ENCODE measurements at regions of chr6 and their contacts with region 1.

Region 1: DNA sequence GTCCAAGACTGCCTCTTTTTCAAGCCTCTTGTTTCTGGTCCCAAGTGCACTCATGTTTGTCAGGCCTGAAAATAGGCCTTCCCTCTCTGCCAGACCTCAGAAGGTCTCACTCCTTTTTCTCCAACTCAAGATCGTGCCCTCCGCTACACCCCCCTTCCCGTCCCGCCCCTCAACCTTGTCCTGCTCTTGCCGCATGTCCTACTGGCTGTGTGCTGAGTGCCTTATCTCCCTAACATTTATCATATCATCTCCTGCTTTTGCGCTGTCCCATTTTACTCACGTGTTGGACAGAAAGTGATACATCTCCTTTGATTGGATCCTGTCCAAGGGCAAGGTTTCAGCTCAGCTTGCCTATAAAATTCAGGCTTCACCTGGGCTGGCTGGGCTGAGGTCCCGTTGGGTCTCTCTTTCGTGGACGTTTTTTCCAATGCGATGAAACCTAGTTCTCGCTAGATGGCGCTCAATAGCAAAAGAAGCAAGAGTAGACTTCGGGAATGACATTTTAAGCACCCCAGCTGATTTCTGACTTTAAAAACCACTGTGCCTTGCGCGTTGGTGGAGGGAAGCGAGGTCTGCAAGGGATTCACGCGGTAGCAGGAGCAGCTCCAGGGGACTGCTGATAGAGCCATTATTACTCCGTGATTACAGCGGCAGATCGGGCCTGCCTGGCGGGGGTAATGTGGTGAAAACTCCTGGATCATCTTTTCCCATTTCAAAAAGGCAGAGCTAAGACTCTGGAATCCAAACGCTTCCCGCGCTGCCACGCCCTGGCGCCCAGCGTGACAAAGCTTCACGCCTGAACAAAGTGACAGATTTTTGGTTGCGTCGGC is 137.6 kb downstream of the IMPG1 start:
- DNase-seq: peak; percentile 64 to 82
- H3K4me3 ChIP-seq: peak overlapping the region; percentile 18
- H3K4me1 ChIP-seq: peaks cover 12% of the 10 kb centered on the region
- H3K27me3 ChIP-seq: 0 out of 2 replicates have a peak, but pooled peaks cover 2% of the 10 kb centered on the region

Region 2: GRCh38 chr6:74187811-74188210 is 1747.0 kb before region 1 on chr6:
- in situ Hi-C with region 1: no loop called
- DNase-seq: no peak
- H3K4me3 ChIP-seq: no peak overlapping the region
- H3K4me1 ChIP-seq: no peaks in the 10 kb centered on the region
- H3K27me3 ChIP-seq: no peaks in the 10 kb centered on the region; the same call in 1 of the 2 replicates

Region 3: GRCh38 chr6:76166874-76167273 is 232.0 kb after region 1 on chr6:
- in situ Hi-C with region 1: loop called (anchors 5 kb)
- DNase-seq: peak in 1 of 2 experiments; percentile 7
- H3K4me3 ChIP-seq: no peak overlapping the region
- H3K4me1 ChIP-seq: no peaks in the 10 kb centered on the region
- H3K27me3 ChIP-seq: no peaks in the 10 kb centered on the region

Region 4: DNA sequence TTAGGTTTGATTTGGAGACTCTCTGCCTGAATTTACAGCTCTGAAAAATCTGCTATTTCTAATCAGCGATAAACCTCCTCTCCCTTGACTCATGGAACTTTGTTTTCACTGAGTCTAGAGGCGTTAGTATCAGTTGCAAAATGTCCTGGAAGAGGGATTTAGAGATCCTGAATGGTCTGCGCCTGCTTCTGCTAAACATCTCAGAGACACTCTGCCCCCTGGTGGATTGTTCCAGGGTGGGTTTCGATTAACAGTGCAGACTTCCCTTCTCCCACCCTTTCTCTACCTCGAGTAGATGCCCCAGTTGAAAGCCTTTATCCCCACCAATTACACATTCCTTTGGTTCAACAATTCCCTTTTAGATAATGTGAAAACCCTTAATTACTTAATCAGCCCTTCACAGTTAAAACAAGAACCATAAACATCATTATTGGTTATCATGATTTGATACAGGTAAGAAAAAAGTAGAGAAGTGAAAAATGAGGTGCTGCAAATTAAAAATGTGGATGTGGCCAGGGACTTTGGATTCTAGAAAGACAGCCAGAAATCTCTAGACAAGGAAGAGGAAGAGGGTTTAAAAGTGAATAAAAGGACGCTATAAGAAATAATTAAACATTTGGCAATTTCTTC is 1523.0 kb after region 1 on chr6:
- in situ Hi-C with region 1: loop called (anchors 25 kb)
- DNase-seq: peak; percentile 50 to 81
- H3K4me3 ChIP-seq: no peak overlapping the region
- H3K4me1 ChIP-seq: no peaks in the 10 kb centered on the region
- H3K27me3 ChIP-seq: peaks cover 6% of the 10 kb centered on the region; the same call in 1 of the 2 replicates

Measured in HAP-1 (cell line).